ENCODE measurements at regions of chr3 and their contacts with region 1.

Region 1: DNA sequence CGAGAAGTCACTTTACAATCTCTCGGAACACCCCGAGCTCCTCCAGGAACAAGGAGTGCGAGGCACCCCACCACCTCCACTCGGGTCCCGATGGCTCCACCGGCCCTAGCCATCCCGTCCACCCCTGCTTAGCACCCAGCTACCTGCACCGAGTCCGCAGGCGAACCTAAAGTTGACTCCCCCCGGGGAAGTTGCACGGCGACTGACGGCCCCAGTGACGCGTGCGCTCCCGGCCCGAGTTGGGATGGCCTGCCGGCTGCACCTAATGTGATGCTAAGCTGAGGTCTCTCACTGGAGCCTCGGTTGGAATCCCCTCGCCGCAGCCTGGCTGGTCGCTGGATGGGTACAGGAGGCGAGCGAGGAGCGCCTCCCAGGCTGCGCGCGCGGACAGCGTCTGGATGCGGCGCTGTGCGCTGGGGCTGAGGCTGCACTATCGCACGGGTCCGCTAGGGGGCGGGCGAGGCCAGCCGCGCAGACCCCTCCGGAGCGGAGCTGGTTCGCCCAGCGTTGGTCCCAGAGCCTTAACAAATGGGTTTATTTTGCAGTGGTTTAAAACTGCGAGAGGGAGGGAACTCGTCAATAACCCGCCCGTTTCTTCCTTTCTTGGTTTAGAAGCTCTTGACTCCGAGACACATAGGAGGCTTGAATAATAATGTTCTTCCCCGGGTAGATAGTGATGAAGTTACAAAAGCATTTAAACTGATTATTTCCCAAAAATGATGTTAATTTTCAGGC is at the start of gene OXTR:
- DNase-seq: peak; percentile 76 to 93 (median 90)
- ATAC-seq: peak; percentile 100
- H3K4me3 ChIP-seq: no peak within 1 kb of the TSS
- H3K27ac ChIP-seq: no peak within 1 kb of the TSS
- H3K4me1 ChIP-seq: peaks cover 0 to 12% of the 10 kb centered on the region in 2 experiments; a peak in 2 of 5 replicates
- H3K27me3 ChIP-seq: peaks cover 4 to 12% of the 10 kb centered on the region in 2 experiments
- CTCF ChIP-seq: peak; percentile 97 to 99 (median 98)
- EP300 ChIP-seq: no peak
- POLR2A ChIP-seq: no peak
- RAD21 ChIP-seq: peak; percentile 70 to 90
- polyA plus RNA-seq, gene OXTR: 0.14 to 0.22 TPM

Region 2: DNA sequence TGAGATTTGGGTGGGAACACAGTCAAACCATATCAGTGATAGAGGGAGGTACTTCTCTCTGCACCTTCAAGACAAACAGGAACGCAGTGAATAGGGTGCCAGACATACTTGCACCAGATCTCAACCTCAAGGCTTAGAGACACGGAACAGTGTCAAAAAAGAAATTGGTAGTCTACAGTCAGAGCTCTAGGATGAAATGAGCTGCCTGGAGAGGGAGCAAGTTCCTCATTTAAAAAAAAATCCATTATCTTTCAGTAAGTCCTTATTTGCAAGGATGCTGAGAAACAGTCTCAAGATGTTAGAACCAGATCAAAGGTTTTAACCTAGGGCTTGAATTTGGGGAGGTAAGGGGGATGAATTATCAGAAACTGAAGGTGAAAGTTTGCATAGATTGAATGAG is 287.9 kb before region 1 on chr3:
- CTCF ChIA-PET with region 1: no interaction called
- POLR2A ChIA-PET with region 1: no interaction called
- in situ Hi-C with region 1: no loop called
- intact Hi-C with region 1: no loop called
- DNase-seq: no peak
- ATAC-seq: no peak
- H3K4me3 ChIP-seq: no peak overlapping the region
- H3K27ac ChIP-seq: no peak overlapping the region
- H3K4me1 ChIP-seq: no peaks in the 10 kb centered on the region
- H3K27me3 ChIP-seq: no peaks in the 10 kb centered on the region
- CTCF ChIP-seq: peak in 1 of 3 experiments; percentile 20; a peak in 1 of 6 replicates
- EP300 ChIP-seq: no peak
- POLR2A ChIP-seq: no peak
- RAD21 ChIP-seq: peak in 1 of 2 experiments; percentile 45; a peak in 2 of 4 replicates

Region 3: DNA sequence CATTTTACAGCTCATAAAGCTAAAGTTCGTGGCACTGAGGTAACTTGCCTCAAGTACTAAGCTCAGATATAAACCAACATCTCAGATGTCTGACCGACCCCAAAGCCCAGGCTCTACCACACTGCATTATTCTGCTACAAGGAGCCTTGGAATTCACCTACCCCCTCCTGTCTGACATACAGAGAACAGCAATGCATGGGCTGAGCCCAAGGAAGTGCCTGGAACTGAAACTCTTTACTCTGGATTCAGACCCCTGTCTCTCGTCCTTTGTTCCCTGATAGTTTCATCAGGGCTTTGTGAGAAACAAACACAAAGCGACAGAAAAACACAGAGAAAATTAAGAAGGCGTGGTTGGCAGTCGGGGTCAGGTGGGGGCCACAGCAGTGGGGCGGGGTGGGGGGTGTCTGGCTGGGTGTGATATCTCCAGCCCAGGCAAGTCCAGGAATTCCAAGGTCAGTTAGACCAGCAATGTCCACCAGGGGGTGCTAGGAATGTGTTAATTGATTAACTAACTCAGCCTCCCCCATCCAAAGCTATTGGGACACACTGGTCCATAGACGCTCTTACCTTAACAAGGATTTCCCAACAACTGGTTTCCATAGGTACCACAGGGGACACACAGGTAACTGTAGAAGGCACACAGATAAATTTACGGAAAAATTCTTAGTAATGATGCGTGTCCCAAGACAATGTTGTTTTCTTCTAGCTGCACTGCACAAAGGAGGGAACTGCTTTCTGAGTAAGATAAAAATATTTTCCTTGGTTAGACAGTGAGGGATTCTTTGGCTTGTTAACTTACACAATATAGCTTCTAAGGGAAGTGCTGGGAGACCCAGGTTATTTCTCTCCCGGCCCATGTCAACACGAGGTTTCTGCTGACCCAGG is 105.8 kb before region 1 on chr3:
- CTCF ChIA-PET with region 1: no interaction called
- POLR2A ChIA-PET with region 1: no interaction called
- in situ Hi-C with region 1: no loop called
- intact Hi-C with region 1: loop called (anchors 5 kb)
- DNase-seq: peak; percentile 87 to 91 (median 90)
- ATAC-seq: peak; percentile 97
- H3K4me3 ChIP-seq: no peak overlapping the region
- H3K27ac ChIP-seq: no peak overlapping the region
- H3K4me1 ChIP-seq: no peaks in the 10 kb centered on the region; a peak in 2 of 5 replicates
- H3K27me3 ChIP-seq: peaks cover 9 to 42% of the 10 kb centered on the region in 2 experiments
- CTCF ChIP-seq: peak; percentile 65 to 76 (median 69)
- EP300 ChIP-seq: no peak
- POLR2A ChIP-seq: no peak
- RAD21 ChIP-seq: peak; percentile 18 to 65; a peak in 3 of 4 replicates

Region 4: GRCh38 chr3:8899986-8900385 is 130.7 kb after region 1 on chr3:
- CTCF ChIA-PET with region 1: no interaction called
- POLR2A ChIA-PET with region 1: no interaction called
- in situ Hi-C with region 1: no loop called
- intact Hi-C with region 1: loop called (anchors 1 kb)
- DNase-seq: no peak
- ATAC-seq: no peak
- H3K4me3 ChIP-seq: no peak overlapping the region
- H3K27ac ChIP-seq: no peak overlapping the region
- H3K4me1 ChIP-seq: peaks cover 0 to 1% of the 10 kb centered on the region in 2 experiments; a peak in 1 of 5 replicates
- H3K27me3 ChIP-seq: no peaks in the 10 kb centered on the region
- CTCF ChIP-seq: no peak
- EP300 ChIP-seq: no peak
- POLR2A ChIP-seq: no peak
- RAD21 ChIP-seq: peak in 1 of 2 experiments; percentile 24; a peak in 1 of 4 replicates

Region 5: DNA sequence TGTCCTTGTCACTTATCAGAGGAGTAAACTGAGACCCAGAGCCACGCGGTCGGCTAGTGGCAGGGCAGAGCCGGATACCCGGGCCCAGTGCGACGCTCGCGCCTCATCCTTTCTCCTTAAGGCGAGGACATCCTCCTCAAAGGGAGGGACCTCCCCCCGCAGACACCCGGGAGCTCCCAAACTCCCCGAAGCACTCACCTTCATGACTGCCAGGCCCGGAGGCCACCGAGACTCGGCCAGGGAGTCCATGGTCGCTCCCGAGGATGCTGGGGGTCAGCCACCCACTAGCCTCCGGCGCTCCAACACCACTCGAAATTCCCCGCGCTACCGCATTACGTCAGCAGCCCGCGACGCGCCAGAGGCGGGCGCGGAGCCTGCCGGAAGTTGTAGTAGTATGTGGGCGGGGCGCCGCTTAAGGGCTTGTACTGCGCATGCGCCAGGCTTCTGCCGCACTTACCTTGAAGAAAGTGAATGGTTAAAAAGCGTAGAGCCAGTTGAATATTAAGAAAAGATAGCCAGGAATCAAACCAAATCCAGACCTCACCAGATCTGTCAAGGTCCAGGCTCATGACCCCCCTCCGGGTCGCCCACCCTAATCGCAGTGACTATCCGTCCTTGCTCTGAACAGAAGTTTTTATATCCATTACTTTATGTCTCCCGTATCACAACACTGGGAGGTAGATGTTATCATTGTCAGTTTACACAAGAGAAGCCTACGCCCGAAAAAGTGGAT is 194.0 kb after region 1 on chr3 and contains the start of gene RAD18:
- CTCF ChIA-PET with region 1: no interaction called
- POLR2A ChIA-PET with region 1: no interaction called
- in situ Hi-C with region 1: no loop called
- intact Hi-C with region 1: loop called (anchors 5 kb)
- DNase-seq: peak; percentile 97 to 98 (median 98)
- ATAC-seq: peak; percentile 92
- H3K4me3 ChIP-seq: peak within 1 kb of the TSS; percentile 58
- H3K27ac ChIP-seq: peak within 1 kb of the TSS; percentile 72
- H3K4me1 ChIP-seq: peaks cover 5 to 19% of the 10 kb centered on the region in 2 experiments; a peak in 4 of 5 replicates
- H3K27me3 ChIP-seq: peaks cover 0 to 7% of the 10 kb centered on the region in 2 experiments; a peak in 2 of 5 replicates
- CTCF ChIP-seq: no peak
- EP300 ChIP-seq: 0 out of 2 replicates have a peak, but pooled peaks have one; percentile 5
- POLR2A ChIP-seq: peak; percentile 84
- RAD21 ChIP-seq: no peak; a peak in 1 of 4 replicates
- polyA plus RNA-seq, gene RAD18: 19.2 to 23.2 TPM

Measured in K562 (cell line).